Mammary epithelial cell (primary cell): ENCODE measurements at regions of chr22 and their contacts with region 1.

Region 1: GRCh38 chr22:41448189-41448808 is 1.7 kb upstream of the TOB2 start:
- DNase-seq: peak; percentile 99
- H3K4me3 ChIP-seq: peak overlapping the region; percentile 76 to 86 (median 81)
- H3K27ac ChIP-seq: peak overlapping the region; percentile 82
- H3K4me1 ChIP-seq: peaks cover 4% of the 10 kb centered on the region
- H3K27me3 ChIP-seq: no peaks in the 10 kb centered on the region
- CTCF ChIP-seq: no peak

Region 2: GRCh38 chr22:41285820-41286638 is 162.3 kb before region 1 on chr22 and contains the start of gene RANGAP1:
- CTCF ChIA-PET with region 1: no interaction called
- dilution Hi-C with region 1: no loop called
- in situ Hi-C with region 1: no loop called
- intact Hi-C with region 1: loop called (anchors 5 kb)
- DNase-seq: peak; percentile 99
- H3K4me3 ChIP-seq: peak within 1 kb of the TSS; percentile 79 to 90 (median 88)
- H3K27ac ChIP-seq: peak within 1 kb of the TSS; percentile 90
- H3K4me1 ChIP-seq: peaks cover 58% of the 10 kb centered on the region
- H3K27me3 ChIP-seq: no peaks in the 10 kb centered on the region
- CTCF ChIP-seq: peak in 1 of 2 donors; percentile 36
- total RNA-seq, gene RANGAP1: 47.8 to 127 TPM

Region 3: GRCh38 chr22:41327124-41327523 is 121.2 kb before region 1 on chr22:
- CTCF ChIA-PET with region 1: no interaction called
- dilution Hi-C with region 1: no loop called
- in situ Hi-C with region 1: no loop called
- intact Hi-C with region 1: no loop called
- DNase-seq: no peak
- H3K4me3 ChIP-seq: no peak overlapping the region
- H3K27ac ChIP-seq: no peak overlapping the region
- H3K4me1 ChIP-seq: no peaks in the 10 kb centered on the region
- H3K27me3 ChIP-seq: no peaks in the 10 kb centered on the region
- CTCF ChIP-seq: no peak

Region 4: GRCh38 chr22:41381329-41382097 is 66.8 kb before region 1 on chr22 and contains the start of gene TEF:
- CTCF ChIA-PET with region 1: no interaction called
- dilution Hi-C with region 1: no loop called
- in situ Hi-C with region 1: no loop called
- intact Hi-C with region 1: loop called (anchors 1 kb)
- DNase-seq: peak; percentile 98
- H3K4me3 ChIP-seq: peak within 1 kb of the TSS; percentile 65 to 78 (median 65)
- H3K27ac ChIP-seq: peak within 1 kb of the TSS; percentile 89
- H3K4me1 ChIP-seq: peaks cover 24% of the 10 kb centered on the region
- H3K27me3 ChIP-seq: no peaks in the 10 kb centered on the region
- CTCF ChIP-seq: no peak
- total RNA-seq, gene TEF: 5.2 TPM

Region 5: GRCh38 chr22:41403532-41404318 is 44.6 kb before region 1 on chr22:
- CTCF ChIA-PET with region 1: interaction called, 3 read pairs
- dilution Hi-C with region 1: no loop called
- in situ Hi-C with region 1: loop called in 1 of 2 experiments (anchors 5 kb)
- intact Hi-C with region 1: loop called (anchors 1 kb)
- DNase-seq: peak; percentile 81
- H3K4me3 ChIP-seq: no peak overlapping the region
- H3K27ac ChIP-seq: no peak overlapping the region
- H3K4me1 ChIP-seq: peaks cover 5% of the 10 kb centered on the region
- H3K27me3 ChIP-seq: no peaks in the 10 kb centered on the region
- CTCF ChIP-seq: peak; percentile 94 to 96

Region 6: DNA sequence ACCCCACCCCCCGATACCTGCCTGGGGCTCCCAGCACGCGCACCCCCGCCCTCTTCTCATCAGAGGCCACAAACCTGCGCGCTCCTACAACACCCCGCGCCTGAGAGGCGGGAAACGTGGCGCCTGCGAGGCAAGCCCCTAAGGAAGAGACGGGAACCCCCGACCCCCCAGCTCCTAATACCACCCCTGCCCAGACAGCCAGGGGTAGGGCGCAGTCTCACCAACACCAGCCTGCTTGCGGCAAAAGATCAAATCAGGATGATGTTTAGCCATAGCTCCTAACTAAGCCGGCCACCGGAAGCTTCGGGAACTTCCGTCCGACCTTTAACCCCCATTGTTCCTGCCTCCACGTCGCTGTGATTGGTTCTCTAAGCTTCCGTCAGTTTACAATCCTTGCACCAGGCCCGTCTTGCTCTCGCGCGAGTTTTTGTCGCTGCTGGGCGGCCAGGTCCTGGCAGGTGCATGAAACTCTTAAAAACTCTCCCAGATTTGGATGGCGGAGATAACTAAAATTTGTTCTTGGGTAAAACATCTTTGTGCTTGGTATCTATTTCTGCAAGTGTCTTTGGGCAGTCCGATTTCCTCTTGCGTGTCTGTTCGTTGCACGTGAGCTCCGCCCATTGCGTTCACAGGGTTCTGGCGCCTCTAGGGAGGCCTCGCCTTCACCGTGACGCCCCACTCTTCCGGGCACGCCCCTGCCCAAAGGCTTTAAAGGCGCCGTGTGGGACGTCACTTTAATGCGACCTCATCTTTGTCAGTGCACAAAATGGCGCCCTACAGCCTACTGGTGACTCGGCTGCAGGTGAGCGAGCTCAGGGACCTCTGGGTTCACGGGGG is 20.3 kb after region 1 on chr22 and contains the starts of genes ACO2 and PHF5A:
- CTCF ChIA-PET with region 1: no interaction called
- dilution Hi-C with region 1: no loop called
- in situ Hi-C with region 1: no loop called
- intact Hi-C with region 1: loop called (anchors 1 kb)
- DNase-seq: peak; percentile 98
- H3K4me3 ChIP-seq: peak within 1 kb of the TSS; percentile 68 to 82 (median 81)
- H3K27ac ChIP-seq: peak within 1 kb of the TSS; percentile 98
- H3K4me1 ChIP-seq: peaks cover 17% of the 10 kb centered on the region
- H3K27me3 ChIP-seq: no peaks in the 10 kb centered on the region
- CTCF ChIP-seq: no peak
- total RNA-seq, gene ACO2: 79.2 to 96.0 TPM
- total RNA-seq, gene PHF5A: 32.2 to 54.3 TPM

Region 7: DNA sequence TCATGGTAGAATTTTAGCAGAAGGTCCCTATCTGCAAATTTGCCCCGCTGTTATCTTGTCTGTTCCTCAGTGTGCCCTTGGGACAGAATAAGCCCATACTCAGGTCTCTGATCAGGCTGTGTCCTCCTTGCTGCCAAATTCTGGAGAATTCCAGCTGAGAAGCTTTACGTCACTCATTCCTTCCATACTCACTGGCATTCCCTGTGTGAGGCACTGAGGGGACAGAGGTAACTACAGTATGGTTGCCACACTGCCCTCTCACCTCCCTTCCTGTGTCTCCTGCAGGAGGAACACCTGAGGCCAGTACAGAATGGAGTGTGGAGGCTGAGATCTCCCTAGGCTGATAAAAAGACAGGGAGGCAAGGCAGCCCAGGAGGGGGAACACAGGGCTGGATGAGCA is 435.1 kb after region 1 on chr22:
- CTCF ChIA-PET with region 1: no interaction called
- dilution Hi-C with region 1: no loop called
- in situ Hi-C with region 1: no loop called
- intact Hi-C with region 1: no loop called
- DNase-seq: no peak
- H3K4me3 ChIP-seq: no peak overlapping the region
- H3K27ac ChIP-seq: no peak overlapping the region
- H3K4me1 ChIP-seq: no peaks in the 10 kb centered on the region
- H3K27me3 ChIP-seq: no peaks in the 10 kb centered on the region
- CTCF ChIP-seq: no peak